Transverse colon (tissue), 4 donors: ENCODE measurements at regions of chr2 and their contacts with region 1.

Region 1: GRCh38 chr2:20737505-20737904 is 70.6 kb downstream of the GDF7 start:
- DNase-seq: no peak
- H3K4me3 ChIP-seq: no peak overlapping the region
- H3K27ac ChIP-seq: no peak overlapping the region
- H3K4me1 ChIP-seq: no peaks in the 10 kb centered on the region
- H3K27me3 ChIP-seq: no peaks in the 10 kb centered on the region
- CTCF ChIP-seq: no peak
- EP300 ChIP-seq: no peak
- POLR2A ChIP-seq: no peak

Region 2: GRCh38 chr2:20707601-20708000 is 29.9 kb before region 1 on chr2:
- in situ Hi-C with region 1: no loop called
- intact Hi-C with region 1: loop called (anchors 1 kb)
- DNase-seq: no peak
- H3K4me3 ChIP-seq: no peak overlapping the region
- H3K27ac ChIP-seq: no peak overlapping the region
- H3K4me1 ChIP-seq: peaks cover 0 to 5% (median 0%) of the 10 kb centered on the region in 4 donors
- H3K27me3 ChIP-seq: no peaks in the 10 kb centered on the region
- CTCF ChIP-seq: no peak
- EP300 ChIP-seq: no peak
- POLR2A ChIP-seq: no peak